ENCODE measurements at regions of chr9 and their contacts with region 1.

Region 1: DNA sequence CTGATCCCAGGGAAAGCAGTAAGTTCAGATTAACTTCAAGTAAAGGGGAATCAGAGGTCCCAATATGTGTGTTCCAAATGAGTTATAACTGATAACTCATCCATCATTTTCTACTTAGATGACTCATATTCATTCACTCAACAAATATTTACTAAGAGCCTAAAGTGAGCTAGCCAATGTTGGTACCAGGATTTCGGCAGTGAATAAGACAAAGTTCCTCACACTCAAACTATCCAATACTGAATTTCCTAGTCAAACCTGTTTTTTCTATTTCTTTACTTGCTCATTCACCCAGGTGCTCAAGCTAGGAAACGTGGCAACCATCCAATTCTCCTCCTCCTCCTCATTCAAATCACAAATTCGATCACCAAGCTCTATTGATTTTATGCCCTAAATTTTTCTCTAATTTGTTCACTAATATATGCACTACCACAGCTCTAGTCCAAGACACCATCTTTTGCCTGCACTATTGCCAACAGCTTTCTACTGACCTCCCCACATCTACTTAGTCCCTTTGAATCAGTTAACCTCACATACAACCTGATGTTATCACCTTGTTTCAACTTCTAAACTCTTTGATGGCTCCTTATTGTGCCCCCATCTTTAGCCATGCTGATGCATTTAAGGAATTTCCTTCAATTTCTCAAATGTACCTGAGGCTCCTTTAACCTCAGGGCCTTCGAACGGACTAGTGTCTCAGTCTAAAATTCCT is 25.6 kb downstream of the FBXW2 start:
- DNase-seq: no peak
- ATAC-seq: no peak
- H3K4me3 ChIP-seq: no peak overlapping the region
- H3K4me3 Mint-ChIP-seq: no peak overlapping the region
- H3K27ac ChIP-seq: no peak overlapping the region
- H3K27ac Mint-ChIP-seq: peak overlapping the region in 8 of 9 donors; percentile 0 to 87 (median 56)
- H3K4me1 ChIP-seq: no peaks in the 10 kb centered on the region
- H3K4me1 Mint-ChIP-seq: peaks cover 0 to 58% (median 3%) of the 10 kb centered on the region in 7 donors
- H3K27me3 ChIP-seq: no peaks in the 10 kb centered on the region
- H3K27me3 Mint-ChIP-seq: no peaks in the 10 kb centered on the region

Region 2: GRCh38 chr9:120723547-120723946 is 44.1 kb before region 1 on chr9:
- CTCF ChIA-PET with region 1: no interaction called
- POLR2A ChIA-PET with region 1: no interaction called
- intact Hi-C with region 1: no loop called
- DNase-seq: no peak
- ATAC-seq: no peak
- H3K4me3 ChIP-seq: no peak overlapping the region
- H3K4me3 Mint-ChIP-seq: no peak overlapping the region
- H3K27ac ChIP-seq: no peak overlapping the region
- H3K27ac Mint-ChIP-seq: no peak overlapping the region
- H3K4me1 ChIP-seq: no peaks in the 10 kb centered on the region
- H3K4me1 Mint-ChIP-seq: peaks cover 0 to 18% (median 0%) of the 10 kb centered on the region in 7 donors
- H3K27me3 ChIP-seq: no peaks in the 10 kb centered on the region
- H3K27me3 Mint-ChIP-seq: no peaks in the 10 kb centered on the region

Region 3: GRCh38 chr9:120916588-120916987 is 149.0 kb after region 1 on chr9:
- CTCF ChIA-PET with region 1: no interaction called
- POLR2A ChIA-PET with region 1: no interaction called
- intact Hi-C with region 1: no loop called
- DNase-seq: no peak
- ATAC-seq: no peak
- H3K4me3 ChIP-seq: no peak overlapping the region
- H3K4me3 Mint-ChIP-seq: peak overlapping the region; percentile 60 to 79 (median 74)
- H3K27ac ChIP-seq: peak overlapping the region; percentile 59
- H3K27ac Mint-ChIP-seq: peak overlapping the region; percentile 82 to 95 (median 92)
- H3K4me1 ChIP-seq: peaks cover 72% of the 10 kb centered on the region in 2 donors
- H3K4me1 Mint-ChIP-seq: peaks cover 60 to 92% (median 81%) of the 10 kb centered on the region in 7 donors
- H3K27me3 ChIP-seq: no peaks in the 10 kb centered on the region
- H3K27me3 Mint-ChIP-seq: no peaks in the 10 kb centered on the region

Region 4: GRCh38 chr9:121179930-121180681 is 412.5 kb after region 1 on chr9:
- CTCF ChIA-PET with region 1: no interaction called
- POLR2A ChIA-PET with region 1: interaction called, 4 read pairs
- intact Hi-C with region 1: loop called in 1 of 2 experiments (anchors 10 kb)
- DNase-seq: no peak
- ATAC-seq: no peak
- H3K4me3 ChIP-seq: no peak overlapping the region
- H3K4me3 Mint-ChIP-seq: no peak overlapping the region
- H3K27ac ChIP-seq: peak overlapping the region; percentile 10
- H3K27ac Mint-ChIP-seq: peak overlapping the region; percentile 2 to 74 (median 53)
- H3K4me1 ChIP-seq: peaks cover under 1 to 4% of the 10 kb centered on the region in 2 donors
- H3K4me1 Mint-ChIP-seq: peaks cover 4 to 37% (median 28%) of the 10 kb centered on the region in 7 donors
- H3K27me3 ChIP-seq: no peaks in the 10 kb centered on the region
- H3K27me3 Mint-ChIP-seq: no peaks in the 10 kb centered on the region